ENCODE measurements at regions of chr2 and their contacts with region 1.

Region 1: GRCh38 chr2:148130581-148130980 is 109.7 kb downstream of the MBD5 start:
- DNase-seq: no peak
- ATAC-seq: no peak
- H3K4me3 ChIP-seq: no peak overlapping the region
- H3K4me3 Mint-ChIP-seq: no peak overlapping the region
- H3K27ac ChIP-seq: no peak overlapping the region
- H3K27ac Mint-ChIP-seq: no peak overlapping the region
- H3K4me1 ChIP-seq: no peaks in the 10 kb centered on the region
- H3K4me1 Mint-ChIP-seq: peaks cover 3% of the 10 kb centered on the region
- H3K27me3 ChIP-seq: no peaks in the 10 kb centered on the region
- H3K27me3 Mint-ChIP-seq: no peaks in the 10 kb centered on the region
- CTCF ChIP-seq: no peak

Region 2: DNA sequence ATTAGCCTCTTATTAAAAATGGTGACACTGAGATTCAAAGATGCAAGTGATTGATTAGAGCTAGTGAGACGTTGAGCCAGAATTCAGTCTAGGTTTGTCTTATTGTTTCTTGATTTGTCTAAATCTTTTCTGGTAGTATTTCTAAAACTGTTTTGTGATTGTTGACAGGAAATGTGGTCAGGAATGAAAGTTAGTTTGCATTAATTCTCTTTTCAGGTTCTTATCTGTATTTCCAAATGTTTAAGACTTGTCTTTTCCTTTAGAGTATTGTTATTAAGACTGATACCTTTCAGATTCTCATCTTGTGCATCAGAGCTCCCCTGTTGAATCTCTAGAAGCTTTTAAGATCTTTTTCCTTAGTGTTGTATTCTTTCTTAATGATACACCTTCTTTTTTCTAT is 20.4 kb before region 1 on chr2:
- CTCF ChIA-PET with region 1: no interaction called
- POLR2A ChIA-PET with region 1: no interaction called
- intact Hi-C with region 1: loop called in 1 of 2 experiments (anchors 2 kb)
- DNase-seq: no peak
- ATAC-seq: no peak
- H3K4me3 ChIP-seq: no peak overlapping the region
- H3K4me3 Mint-ChIP-seq: no peak overlapping the region
- H3K27ac ChIP-seq: no peak overlapping the region
- H3K27ac Mint-ChIP-seq: peak overlapping the region; percentile 4
- H3K4me1 ChIP-seq: peaks cover 7% of the 10 kb centered on the region
- H3K4me1 Mint-ChIP-seq: peaks cover 15% of the 10 kb centered on the region
- H3K27me3 ChIP-seq: no peaks in the 10 kb centered on the region
- H3K27me3 Mint-ChIP-seq: no peaks in the 10 kb centered on the region
- CTCF ChIP-seq: no peak